Activated T-helper 2 cell treated with anti-CD3 and anti-CD28 coated beads, Interferon-gamma antibody, Interleukin-2, Interleukin-4, amounts not matched to agents 10 μg/mL and 5 μg/mL and 100 μg/mL, durations not matched to agents 14 hours and 24 hours and 36 hours (primary cell): ENCODE measurements at regions of chrX and their contacts with region 1.

Region 1: GRCh38 chrX:135050603-135051002 is 1.3 kb downstream of the RTL8A start:
- DNase-seq: no peak
- H3K4me3 Mint-ChIP-seq: peak overlapping the region; percentile 92
- H3K27ac Mint-ChIP-seq: peak overlapping the region; percentile 69
- H3K4me1 Mint-ChIP-seq: peaks cover 23% of the 10 kb centered on the region
- H3K27me3 Mint-ChIP-seq: no peaks in the 10 kb centered on the region

Region 2: DNA sequence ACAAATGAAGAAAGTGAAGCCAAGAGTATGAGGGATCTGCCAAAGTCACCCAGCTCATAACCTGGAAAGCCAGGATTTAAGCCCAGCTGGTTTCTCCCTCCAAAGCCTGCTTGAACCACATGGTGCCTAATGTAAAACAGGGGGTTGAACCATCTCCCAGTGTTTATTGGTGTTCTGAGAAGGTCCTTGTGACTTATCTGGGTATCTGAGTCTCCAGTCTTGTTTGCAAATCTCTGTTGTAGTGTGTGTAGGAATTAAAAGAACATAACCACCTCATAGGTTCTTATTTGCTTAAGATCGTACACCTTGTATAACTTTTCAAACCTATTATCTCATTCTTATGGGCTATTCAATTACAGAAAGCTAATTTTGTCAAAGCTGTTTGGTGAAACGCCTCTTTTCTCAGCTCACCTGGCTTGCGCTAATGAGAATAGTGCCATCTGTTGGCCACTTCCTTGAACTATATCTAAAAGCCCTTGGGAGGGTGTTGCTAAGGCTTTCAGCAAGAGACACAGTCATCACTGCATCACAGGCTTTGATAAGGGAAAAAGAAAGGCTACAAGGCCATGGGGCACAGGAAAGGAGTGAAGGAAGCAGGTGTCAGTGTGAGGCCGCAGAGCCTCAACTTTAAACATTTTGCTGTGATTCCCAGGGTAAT is 35.7 kb after region 1 on chrX:
- intact Hi-C with region 1: loop called (anchors 2 kb)
- DNase-seq: peak; percentile 39
- H3K4me3 Mint-ChIP-seq: no peak overlapping the region
- H3K27ac Mint-ChIP-seq: no peak overlapping the region
- H3K4me1 Mint-ChIP-seq: peaks cover 4% of the 10 kb centered on the region
- H3K27me3 Mint-ChIP-seq: peaks cover 8% of the 10 kb centered on the region

Region 3: GRCh38 chrX:135099493-135099783 is 48.8 kb after region 1 on chrX:
- intact Hi-C with region 1: no loop called
- DNase-seq: no peak
- H3K4me3 Mint-ChIP-seq: peak overlapping the region; percentile 47
- H3K27ac Mint-ChIP-seq: no peak overlapping the region
- H3K4me1 Mint-ChIP-seq: peaks cover 5% of the 10 kb centered on the region
- H3K27me3 Mint-ChIP-seq: peaks cover 46% of the 10 kb centered on the region

Region 4: DNA sequence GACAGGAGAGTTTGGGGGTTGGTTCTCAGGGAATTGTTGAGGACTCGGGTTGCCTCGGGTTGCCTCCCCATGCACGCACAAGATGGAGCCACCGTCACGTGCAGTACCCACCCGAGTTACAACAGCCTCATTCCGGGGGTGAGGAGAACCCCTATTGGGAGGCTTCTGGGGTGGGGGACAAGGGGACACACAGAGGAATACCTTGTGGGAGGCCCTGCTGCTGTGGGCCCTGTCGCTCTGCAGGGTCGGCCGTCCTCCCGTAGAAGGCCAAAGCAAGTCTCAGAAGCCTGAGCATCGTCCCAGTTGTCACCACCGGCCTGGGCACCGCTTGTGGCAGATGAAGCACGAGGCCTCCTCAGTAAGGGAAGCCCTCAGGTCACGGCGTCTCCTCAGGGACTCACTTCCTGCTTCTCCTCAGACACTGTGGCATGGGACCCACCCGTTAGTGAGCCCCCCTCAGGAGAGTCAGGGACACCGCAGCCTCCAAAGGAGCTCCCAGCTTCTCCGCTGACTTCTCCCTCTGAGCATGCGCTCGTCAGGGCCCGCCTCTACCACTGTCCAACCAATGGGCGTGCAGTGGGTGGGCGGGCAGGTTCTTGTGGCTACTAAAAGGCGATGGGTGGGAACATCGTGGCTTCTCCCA is 120.4 kb after region 1 on chrX and contains the start of gene CT55:
- intact Hi-C with region 1: no loop called
- DNase-seq: no peak
- H3K4me3 Mint-ChIP-seq: no peak within 1 kb of the TSS
- H3K27ac Mint-ChIP-seq: no peak within 1 kb of the TSS
- H3K4me1 Mint-ChIP-seq: peaks cover 3% of the 10 kb centered on the region
- H3K27me3 Mint-ChIP-seq: peaks cover 8% of the 10 kb centered on the region
- total RNA-seq, gene CT55: not detected in 2 replicates